Endothelial cell of umbilical vein (primary cell): ENCODE measurements at regions of chr2 and their contacts with region 1.

Region 1: GRCh38 chr2:65129826-65130663 is at the start of gene RAB1A:
- DNase-seq: peak; percentile 100
- H3K4me3 ChIP-seq: peak within 1 kb of the TSS; percentile 98 to 100 (median 100)
- H3K27ac ChIP-seq: peak within 1 kb of the TSS; percentile 87
- H3K4me1 ChIP-seq: peaks cover 33% of the 10 kb centered on the region
- H3K27me3 ChIP-seq: no peaks in the 10 kb centered on the region
- CTCF ChIP-seq: peak; percentile 8 to 55
- POLR2A ChIP-seq: peak; percentile 69
- total RNA-seq, gene RAB1A: 170 and 176 TPM in 2 replicates

Region 2: DNA sequence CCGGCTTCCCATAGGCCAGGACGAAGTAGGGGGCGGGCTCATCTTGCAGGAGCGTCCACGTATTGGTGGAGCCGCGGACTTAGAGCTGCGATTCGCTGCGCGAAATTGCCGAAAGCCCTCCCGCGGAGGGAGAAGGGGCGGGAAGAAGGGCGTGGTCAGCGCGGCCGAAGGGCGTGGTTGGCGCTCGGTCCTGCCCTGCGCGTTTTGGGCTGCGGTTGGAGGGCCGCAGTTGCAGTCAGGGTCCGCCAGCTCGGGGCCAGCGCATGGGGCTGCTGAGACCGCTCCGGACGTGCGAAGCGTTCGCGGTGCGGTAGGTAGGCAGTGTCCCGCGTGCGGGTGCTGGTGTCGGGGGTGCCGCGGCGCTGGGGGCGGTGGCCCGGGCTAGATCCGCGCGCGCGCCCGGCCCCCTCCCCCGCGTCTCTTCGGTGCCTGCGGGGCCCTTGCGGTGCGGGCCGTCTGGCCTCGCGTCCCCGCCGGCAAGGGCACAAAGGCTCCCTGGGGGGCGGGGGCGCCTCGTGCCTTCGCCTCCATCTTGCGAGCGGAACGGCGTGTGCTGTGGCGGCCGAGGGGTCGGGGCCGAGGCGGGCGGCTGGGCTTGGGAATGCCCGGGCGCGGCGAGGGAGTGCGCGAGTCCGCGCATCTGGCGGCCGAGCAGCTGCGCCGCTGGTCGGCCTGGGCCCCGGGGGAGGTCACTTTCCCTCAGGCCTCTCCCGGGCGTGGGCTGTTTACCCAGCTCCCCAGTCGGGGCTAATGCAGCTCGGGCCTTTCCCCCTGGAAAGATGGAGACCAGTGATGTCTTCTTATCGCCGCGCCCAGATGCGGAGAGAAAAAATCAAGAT is 73.6 kb before region 1 on chr2 and contains the start of gene CEP68:
- CTCF ChIA-PET with region 1: interaction called, 8 read pairs
- POLR2A ChIA-PET with region 1: interaction called, 7 read pairs
- dilution Hi-C with region 1: no loop called
- intact Hi-C with region 1: loop called (anchors 1 kb)
- DNase-seq: peak; percentile 99
- H3K4me3 ChIP-seq: peak within 1 kb of the TSS; percentile 74 to 96 (median 78)
- H3K27ac ChIP-seq: peak within 1 kb of the TSS; percentile 81
- H3K4me1 ChIP-seq: peaks cover 33% of the 10 kb centered on the region
- H3K27me3 ChIP-seq: no peaks in the 10 kb centered on the region
- CTCF ChIP-seq: no peak
- POLR2A ChIP-seq: peak; percentile 95
- total RNA-seq, gene CEP68: 20.0 and 21.4 TPM in 2 replicates

Region 3: DNA sequence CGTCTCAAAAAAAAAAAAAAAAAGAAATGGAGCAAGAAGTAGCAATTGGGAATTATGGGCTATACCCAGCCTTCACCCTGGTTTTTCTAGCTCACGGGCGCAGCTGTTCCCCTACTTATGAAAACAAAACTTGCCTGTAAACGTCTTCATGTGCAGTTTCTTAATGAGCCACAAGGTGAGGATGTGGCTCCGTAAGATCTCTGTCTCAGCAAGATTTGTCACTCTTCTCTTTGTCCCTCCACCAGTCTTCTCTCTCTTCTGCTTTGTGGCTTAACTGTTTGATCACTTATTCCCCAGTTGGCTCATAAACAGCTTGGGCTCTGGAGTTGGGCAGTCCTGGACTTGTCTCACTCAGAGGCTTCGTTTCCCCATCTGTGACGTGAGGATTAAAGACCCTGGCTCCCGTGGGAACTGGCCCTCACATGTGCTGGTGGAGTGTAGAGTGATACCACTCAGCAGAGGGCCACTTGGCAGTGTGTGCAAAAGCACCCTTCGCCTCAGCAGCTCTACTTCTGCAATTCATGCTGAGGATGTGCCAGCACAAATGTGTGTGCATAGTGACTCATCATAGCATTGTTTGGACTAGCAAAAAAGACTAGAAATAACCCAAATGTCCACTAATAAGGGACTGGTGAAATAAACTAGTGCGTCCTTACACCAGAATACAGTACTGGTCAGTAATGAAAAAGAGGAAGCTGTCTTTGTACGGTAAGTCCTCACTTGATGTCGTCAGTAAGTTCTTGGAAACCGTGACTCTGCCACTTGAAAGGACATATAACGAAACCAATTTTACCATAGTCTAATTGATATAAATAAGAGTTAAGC is 65.1 kb before region 1 on chr2:
- CTCF ChIA-PET with region 1: interaction called, 14 read pairs
- POLR2A ChIA-PET with region 1: no interaction called
- dilution Hi-C with region 1: no loop called
- intact Hi-C with region 1: loop called (anchors 2 kb)
- DNase-seq: peak; percentile 93
- H3K4me3 ChIP-seq: no peak overlapping the region
- H3K27ac ChIP-seq: peak overlapping the region; percentile 48
- H3K4me1 ChIP-seq: peaks cover 33% of the 10 kb centered on the region
- H3K27me3 ChIP-seq: no peaks in the 10 kb centered on the region
- CTCF ChIP-seq: peak; percentile 54 to 61
- POLR2A ChIP-seq: no peak

Region 4: DNA sequence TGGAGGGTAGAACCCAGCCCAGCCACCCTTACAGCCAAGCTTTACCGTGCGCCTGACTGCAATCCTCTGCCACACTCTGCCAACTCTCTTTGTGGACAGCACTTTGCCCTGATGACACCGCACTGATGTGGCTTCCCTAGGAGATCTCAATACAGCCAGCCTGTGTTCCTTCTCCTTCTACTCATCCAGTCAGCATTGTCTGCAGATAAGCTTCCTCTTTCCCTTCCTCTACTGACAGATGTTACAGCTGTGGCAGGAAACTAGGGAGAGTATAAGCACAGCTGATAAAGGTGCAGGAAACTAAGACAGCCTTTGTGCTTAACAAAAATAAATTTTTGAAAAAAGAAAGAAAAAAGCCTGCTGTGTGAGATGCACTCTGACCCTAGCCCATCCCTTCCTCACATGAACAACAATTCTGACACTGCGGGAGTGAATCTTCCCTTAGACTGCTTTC is 48.8 kb before region 1 on chr2:
- CTCF ChIA-PET with region 1: interaction called, 8 read pairs
- POLR2A ChIA-PET with region 1: interaction called, 6 read pairs
- dilution Hi-C with region 1: no loop called
- intact Hi-C with region 1: loop called (anchors 1 kb)
- DNase-seq: peak; percentile 84
- H3K4me3 ChIP-seq: no peak overlapping the region
- H3K27ac ChIP-seq: peak overlapping the region; percentile 37
- H3K4me1 ChIP-seq: peaks cover 17% of the 10 kb centered on the region
- H3K27me3 ChIP-seq: no peaks in the 10 kb centered on the region
- CTCF ChIP-seq: no peak
- POLR2A ChIP-seq: peak; percentile 63

Region 5: GRCh38 chr2:65107530-65107929 is 22.5 kb before region 1 on chr2:
- CTCF ChIA-PET with region 1: interaction called, 5 read pairs
- POLR2A ChIA-PET with region 1: interaction called, 10 read pairs
- dilution Hi-C with region 1: no loop called
- intact Hi-C with region 1: no loop called
- DNase-seq: no peak
- H3K4me3 ChIP-seq: no peak overlapping the region
- H3K27ac ChIP-seq: no peak overlapping the region
- H3K4me1 ChIP-seq: no peaks in the 10 kb centered on the region
- H3K27me3 ChIP-seq: no peaks in the 10 kb centered on the region
- CTCF ChIP-seq: no peak
- POLR2A ChIP-seq: no peak

Region 6: DNA sequence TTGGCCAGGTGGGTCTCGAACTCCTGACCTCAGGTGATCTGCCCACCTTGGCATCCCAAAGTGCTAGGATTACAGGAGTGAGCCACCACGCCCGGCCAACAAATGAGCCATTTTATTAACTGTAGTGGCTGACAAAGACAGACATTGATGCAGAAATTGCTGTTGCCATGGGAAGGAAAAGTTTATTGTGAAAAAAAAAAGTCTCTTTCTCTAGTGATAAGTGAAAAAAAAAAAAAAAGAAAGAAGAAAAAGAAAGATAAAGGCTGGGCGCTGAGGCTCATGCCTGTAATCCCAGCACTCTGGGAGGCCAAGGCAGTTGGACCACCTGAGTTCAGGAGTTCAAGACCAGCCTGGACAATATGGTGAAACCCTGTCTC is 39.7 kb after region 1 on chr2:
- CTCF ChIA-PET with region 1: interaction called, 12 read pairs
- POLR2A ChIA-PET with region 1: no interaction called
- dilution Hi-C with region 1: no loop called
- intact Hi-C with region 1: no loop called
- DNase-seq: no peak
- H3K4me3 ChIP-seq: no peak overlapping the region
- H3K27ac ChIP-seq: no peak overlapping the region
- H3K4me1 ChIP-seq: no peaks in the 10 kb centered on the region
- H3K27me3 ChIP-seq: peaks cover 0 to 4% of the 10 kb centered on the region in 2 experiments
- CTCF ChIP-seq: no peak
- POLR2A ChIP-seq: no peak

Region 7: DNA sequence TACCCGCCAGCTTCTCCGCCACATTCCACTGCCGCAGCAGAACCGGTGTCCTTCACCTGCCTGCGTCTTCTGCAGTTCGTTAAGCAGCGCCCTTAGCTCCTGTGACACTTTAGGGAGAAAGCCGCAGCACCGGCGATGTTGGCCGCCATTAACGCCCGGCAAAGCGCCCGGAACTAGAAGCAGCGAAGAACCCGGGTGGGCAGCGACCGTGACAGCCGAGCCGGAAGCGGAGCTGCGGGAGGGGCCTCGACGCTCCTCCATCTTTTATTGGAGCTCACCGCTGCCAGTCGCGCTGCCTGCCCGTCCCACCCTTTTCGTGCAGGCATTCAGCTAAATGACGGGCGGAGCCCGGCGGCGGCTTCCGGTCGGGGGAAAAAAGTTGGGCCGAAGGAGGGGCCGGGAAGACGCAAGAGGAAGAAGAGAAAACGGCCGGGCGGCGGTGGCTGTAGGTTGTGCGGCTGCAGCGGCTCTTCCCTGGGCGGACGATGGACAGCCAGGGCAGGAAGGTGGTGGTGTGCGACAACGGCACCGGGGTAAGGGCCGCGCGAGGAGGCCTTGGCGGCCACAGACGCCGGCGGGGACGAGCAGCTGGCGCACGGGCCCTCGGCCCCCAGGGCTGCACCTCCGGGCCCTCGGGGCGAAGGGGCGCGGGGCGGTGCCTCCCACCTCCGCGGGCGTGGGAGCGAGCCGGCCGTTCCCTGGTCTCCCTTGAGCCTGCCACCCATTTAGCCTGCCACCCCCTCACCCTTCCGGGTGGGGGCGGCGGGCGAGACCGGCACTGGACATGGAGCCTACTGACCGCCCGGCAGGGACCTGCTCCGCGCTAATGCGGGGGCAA is 97.6 kb after region 1 on chr2 and contains the start of gene ACTR2:
- CTCF ChIA-PET with region 1: interaction called, 3 read pairs
- POLR2A ChIA-PET with region 1: interaction called, 8 read pairs
- dilution Hi-C with region 1: no loop called
- intact Hi-C with region 1: loop called (anchors 1 kb)
- DNase-seq: peak; percentile 97
- H3K4me3 ChIP-seq: peak within 1 kb of the TSS; percentile 67 to 90 (median 74)
- H3K27ac ChIP-seq: peak within 1 kb of the TSS; percentile 80
- H3K4me1 ChIP-seq: peaks cover 31% of the 10 kb centered on the region
- H3K27me3 ChIP-seq: no peaks in the 10 kb centered on the region
- CTCF ChIP-seq: no peak
- POLR2A ChIP-seq: peak; percentile 87
- total RNA-seq, gene ACTR2: 287 and 301 TPM in 2 replicates

Region 8: DNA sequence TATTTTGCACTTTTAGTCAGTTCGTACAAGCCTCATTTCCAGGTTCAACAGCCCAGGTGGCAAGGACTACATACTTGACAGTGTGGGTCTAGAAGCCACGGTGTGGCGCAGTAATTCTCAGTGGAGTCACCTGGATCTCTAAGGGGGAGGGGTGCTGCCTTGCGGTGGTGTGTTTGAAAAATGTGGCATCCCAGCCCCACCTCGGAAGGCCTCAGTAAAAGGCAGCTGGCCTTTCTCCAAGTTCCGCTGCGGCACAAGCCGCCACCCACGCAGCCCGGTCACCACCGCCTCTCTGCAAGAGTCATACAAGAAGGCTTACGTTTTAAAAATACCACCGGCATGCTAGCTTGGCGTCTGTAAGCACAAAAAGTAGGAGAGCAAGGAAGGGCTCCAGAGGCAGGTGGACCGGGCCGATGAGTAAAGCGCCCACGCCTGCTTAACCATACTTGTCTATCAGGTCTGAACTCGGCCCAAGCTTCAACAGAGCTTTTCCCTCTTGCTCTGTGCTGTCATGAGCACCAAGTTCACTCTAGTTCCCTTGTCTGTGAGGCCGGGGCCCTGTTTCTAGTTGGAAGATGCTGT is 252.8 kb after region 1 on chr2:
- CTCF ChIA-PET with region 1: no interaction called
- POLR2A ChIA-PET with region 1: no interaction called
- dilution Hi-C with region 1: no loop called
- intact Hi-C with region 1: no loop called
- DNase-seq: no peak
- H3K4me3 ChIP-seq: no peak overlapping the region
- H3K27ac ChIP-seq: no peak overlapping the region
- H3K4me1 ChIP-seq: peaks cover 21% of the 10 kb centered on the region
- H3K27me3 ChIP-seq: peaks cover 59 to 60% of the 10 kb centered on the region in 2 experiments
- CTCF ChIP-seq: no peak
- POLR2A ChIP-seq: no peak